Heart right ventricle (tissue), 16 donors: ENCODE measurements at regions of chr16 and their contacts with region 1.

Region 1: GRCh38 chr16:10812312-10813098 is 6.1 kb downstream of the TVP23A start:
- DNase-seq: no peak
- ATAC-seq: peak in 1 of 8 donors; percentile 33
- H3K4me3 ChIP-seq: no peak overlapping the region
- H3K27ac ChIP-seq: no peak overlapping the region
- H3K4me1 ChIP-seq: peaks cover 0 to under 1% (median 0%) of the 10 kb centered on the region in 9 donors
- H3K27me3 ChIP-seq: no peaks in the 10 kb centered on the region
- CTCF ChIP-seq: no peak

Region 2: DNA sequence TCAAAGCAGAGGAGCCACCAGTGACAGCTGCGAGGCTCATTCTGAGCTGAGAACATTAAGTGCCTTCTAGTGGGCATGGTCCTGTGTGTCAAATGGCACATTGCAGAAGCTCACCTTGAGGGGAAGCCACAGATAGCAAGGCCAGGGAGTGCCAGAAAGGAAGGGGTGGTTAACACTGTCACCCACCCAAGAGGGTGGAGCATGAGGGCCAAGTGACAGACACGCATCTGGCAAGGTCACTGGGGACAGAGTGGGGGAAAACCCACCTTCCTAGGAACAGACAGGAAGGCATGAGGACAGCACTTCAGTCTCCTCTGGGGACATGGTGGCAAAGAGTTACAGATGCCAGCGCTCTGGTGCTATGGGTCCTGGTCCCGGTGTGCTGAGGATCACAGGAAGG is 46.7 kb before region 1 on chr16:
- intact Hi-C with region 1: loop called in 2 of 10 experiments (anchors 5 to 10 kb)
- DNase-seq: no peak
- ATAC-seq: peak in 4 of 8 donors; percentile 11 to 38 (median 16)
- H3K4me3 ChIP-seq: no peak overlapping the region
- H3K27ac ChIP-seq: no peak overlapping the region
- H3K4me1 ChIP-seq: peaks cover 0 to 36% (median 10%) of the 10 kb centered on the region in 9 donors
- H3K27me3 ChIP-seq: no peaks in the 10 kb centered on the region
- CTCF ChIP-seq: no peak